Activated T-helper 1 cell treated with anti-CD3 and anti-CD28 coated beads, Interleukin-12 subunit alpha, Interleukin-12 subunit beta, Interleukin-2, Interleukin-4 antibody, amounts not matched to agents 30 ng/mL and 10 ng/mL and 1 ng/mL, durations not matched to agents 14 hours and 24 hours and 36 hours (primary cell): ENCODE measurements at regions of chr14 and their contacts with region 1.

Region 1: GRCh38 chr14:77097700-77098528 is at the start of gene CIPC:
- DNase-seq: peak; percentile 99
- H3K4me3 Mint-ChIP-seq: peak within 1 kb of the TSS; percentile 96
- H3K27ac Mint-ChIP-seq: peak within 1 kb of the TSS; percentile 97
- H3K4me1 Mint-ChIP-seq: peaks cover 40% of the 10 kb centered on the region
- H3K27me3 Mint-ChIP-seq: peaks cover 4% of the 10 kb centered on the region
- total RNA-seq, gene CIPC: 10.3 and 11.5 TPM in 2 replicates

Region 2: DNA sequence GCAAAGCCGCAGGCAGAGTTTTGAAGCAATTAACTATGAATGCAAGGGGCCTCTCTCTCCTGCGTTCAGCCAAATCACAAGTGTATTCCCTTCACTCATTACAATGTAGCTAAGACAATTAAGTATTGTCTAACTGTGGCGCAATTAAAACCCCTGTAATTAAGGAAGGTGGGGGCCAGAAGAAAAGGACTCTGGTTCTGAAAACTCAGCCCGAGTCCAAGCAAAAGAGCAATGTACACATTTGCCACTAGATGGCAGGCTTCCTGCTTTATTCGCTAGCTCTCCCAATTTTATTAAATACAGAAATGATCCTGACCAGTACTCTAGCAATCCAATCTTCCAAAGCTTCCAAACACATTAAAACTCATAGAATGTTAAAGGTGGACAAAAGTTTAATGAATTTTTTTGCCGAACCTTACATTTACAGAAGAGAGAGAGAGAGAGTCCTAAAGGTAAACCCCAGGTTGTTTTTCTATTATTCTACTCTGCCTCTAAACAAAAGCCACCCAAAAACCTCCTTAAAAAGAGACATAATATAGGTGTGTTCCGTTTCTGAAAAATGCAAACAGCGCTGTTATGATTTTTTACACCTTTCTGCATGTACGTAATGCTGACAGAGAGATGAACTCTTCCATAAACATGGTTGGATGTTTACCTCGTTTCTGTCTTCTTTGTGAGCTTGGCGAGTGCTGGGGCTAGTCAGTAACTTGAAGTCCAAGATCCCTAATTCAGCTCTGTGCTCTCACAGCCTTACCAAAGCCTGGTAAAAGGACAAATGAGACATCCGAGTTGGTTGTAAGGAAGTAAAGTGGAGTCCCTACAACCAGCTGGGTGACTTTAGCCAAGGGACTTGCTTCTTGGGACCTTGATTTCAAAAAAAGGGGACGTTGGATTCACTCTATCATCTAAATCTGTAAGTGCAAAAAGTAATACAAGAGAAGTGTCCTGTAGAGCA is 387.6 kb before region 1 on chr14:
- intact Hi-C with region 1: loop called (anchors 2 kb)
- DNase-seq: no peak
- H3K4me3 Mint-ChIP-seq: no peak overlapping the region
- H3K27ac Mint-ChIP-seq: no peak overlapping the region
- H3K4me1 Mint-ChIP-seq: no peaks in the 10 kb centered on the region
- H3K27me3 Mint-ChIP-seq: peaks cover 14% of the 10 kb centered on the region

Region 3: DNA sequence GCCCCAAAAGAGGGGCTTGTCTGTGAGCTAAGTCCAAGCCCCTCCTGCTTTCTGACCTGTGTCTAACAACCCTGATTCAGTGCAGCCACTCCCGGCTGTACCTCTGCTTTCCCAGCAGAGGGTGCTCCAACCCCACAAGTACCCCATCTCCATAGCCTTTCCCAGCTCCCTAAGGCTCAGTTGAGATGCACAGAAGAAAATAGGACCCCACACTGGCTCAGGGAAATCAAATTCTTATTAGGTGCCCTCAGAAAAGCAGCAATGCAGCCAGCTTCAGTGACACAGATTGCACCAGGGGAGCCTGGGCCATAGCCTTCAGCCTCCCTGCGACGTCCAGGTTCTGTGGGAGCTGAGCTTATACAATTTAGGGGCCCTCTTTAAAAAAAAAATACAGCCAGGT is 221.8 kb before region 1 on chr14:
- intact Hi-C with region 1: loop called (anchors 1 kb)
- DNase-seq: peak; percentile 9
- H3K4me3 Mint-ChIP-seq: no peak overlapping the region
- H3K27ac Mint-ChIP-seq: no peak overlapping the region
- H3K4me1 Mint-ChIP-seq: no peaks in the 10 kb centered on the region
- H3K27me3 Mint-ChIP-seq: peaks cover 10% of the 10 kb centered on the region

Region 4: GRCh38 chr14:76962303-76962660 is 135.6 kb before region 1 on chr14:
- intact Hi-C with region 1: loop called (anchors 1 kb)
- DNase-seq: no peak
- H3K4me3 Mint-ChIP-seq: peak overlapping the region; percentile 80
- H3K27ac Mint-ChIP-seq: peak overlapping the region; percentile 80
- H3K4me1 Mint-ChIP-seq: peaks cover 83% of the 10 kb centered on the region
- H3K27me3 Mint-ChIP-seq: peaks cover 26% of the 10 kb centered on the region

Region 5: DNA sequence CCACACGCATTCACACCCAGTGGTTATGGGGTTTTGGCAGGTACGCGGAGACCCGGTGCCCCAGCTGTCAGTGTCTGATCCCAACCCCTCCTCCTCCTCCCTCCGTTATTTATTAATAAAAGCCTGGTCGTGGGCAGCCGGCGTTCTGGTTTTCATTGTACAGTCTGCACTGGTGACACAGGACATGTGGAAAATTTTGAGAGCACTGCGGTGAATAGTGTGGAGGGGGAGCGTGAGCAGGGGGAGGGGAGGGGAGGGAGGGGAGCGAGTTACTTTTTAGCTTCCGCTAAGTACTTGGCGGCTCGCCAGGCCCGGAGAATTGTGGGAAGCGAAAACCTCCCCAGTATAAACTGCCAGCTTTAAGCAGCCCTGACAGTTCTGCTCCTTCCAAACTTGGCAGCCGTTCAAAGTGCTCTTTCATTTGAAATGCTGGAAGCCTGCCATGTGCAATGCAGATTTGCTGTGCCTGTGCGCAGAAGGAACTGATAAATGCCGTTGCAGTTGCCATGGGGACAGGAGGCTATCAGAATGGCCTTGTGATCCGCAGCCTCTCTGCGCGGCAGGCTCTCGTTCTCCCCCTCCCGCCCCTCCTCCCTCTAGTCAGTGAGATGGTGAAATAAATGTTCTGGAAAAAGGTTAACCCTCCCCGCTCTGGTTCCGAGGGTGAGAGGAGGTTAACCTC is 57.7 kb before region 1 on chr14:
- intact Hi-C with region 1: loop called (anchors 1 kb)
- DNase-seq: peak; percentile 83
- H3K4me3 Mint-ChIP-seq: peak overlapping the region; percentile 80
- H3K27ac Mint-ChIP-seq: peak overlapping the region; percentile 91
- H3K4me1 Mint-ChIP-seq: peaks cover 85% of the 10 kb centered on the region
- H3K27me3 Mint-ChIP-seq: no peaks in the 10 kb centered on the region

Region 6: DNA sequence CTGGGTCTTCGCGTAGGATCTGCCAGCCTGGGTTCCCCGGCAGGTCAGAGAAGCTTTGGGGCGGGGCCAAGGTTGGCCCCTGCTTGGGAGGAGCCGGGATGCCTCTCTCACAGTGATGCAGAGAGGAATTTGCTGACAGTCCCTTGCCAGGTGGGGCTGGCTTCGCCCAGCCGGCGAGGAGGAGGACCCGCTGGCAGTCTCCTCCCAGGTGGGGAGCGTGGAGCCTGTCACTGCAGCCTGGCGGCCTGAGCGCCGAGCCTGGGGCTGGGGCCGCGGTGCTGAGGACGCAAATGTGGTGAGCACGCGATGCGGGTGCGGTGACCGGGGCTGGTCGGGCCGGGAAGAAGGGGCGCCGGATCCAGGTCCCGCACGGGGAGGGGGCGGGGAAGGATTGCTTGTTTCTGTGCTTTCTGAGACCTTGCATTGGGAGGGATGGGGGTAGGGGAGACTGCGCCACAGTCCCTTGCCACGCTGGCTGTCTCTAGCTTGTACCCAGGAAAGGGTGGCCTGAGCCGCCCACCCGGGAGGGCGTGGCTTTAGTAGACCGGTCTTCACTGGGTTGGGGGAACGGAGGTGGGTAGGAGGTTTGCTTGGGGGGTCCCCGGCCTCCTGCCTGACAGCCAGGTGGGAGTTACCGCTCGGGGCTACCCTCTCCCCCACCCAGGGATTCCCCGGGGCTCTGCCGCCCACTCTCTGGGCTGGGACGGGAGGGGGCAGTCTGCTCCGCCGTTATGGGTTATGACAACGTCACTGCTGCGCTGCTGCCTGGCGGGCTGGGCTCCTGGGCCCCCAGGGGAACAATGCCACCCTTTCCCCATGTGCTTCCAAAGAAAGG is 83.9 kb after region 1 on chr14 and contains the start of gene TMEM63C:
- intact Hi-C with region 1: no loop called
- DNase-seq: peak; percentile 37
- H3K4me3 Mint-ChIP-seq: peak within 1 kb of the TSS; percentile 73
- H3K27ac Mint-ChIP-seq: no peak within 1 kb of the TSS
- H3K4me1 Mint-ChIP-seq: peaks cover 16% of the 10 kb centered on the region
- H3K27me3 Mint-ChIP-seq: peaks cover 15% of the 10 kb centered on the region
- total RNA-seq, gene TMEM63C: 1.6 TPM in 2 replicates

Region 7: DNA sequence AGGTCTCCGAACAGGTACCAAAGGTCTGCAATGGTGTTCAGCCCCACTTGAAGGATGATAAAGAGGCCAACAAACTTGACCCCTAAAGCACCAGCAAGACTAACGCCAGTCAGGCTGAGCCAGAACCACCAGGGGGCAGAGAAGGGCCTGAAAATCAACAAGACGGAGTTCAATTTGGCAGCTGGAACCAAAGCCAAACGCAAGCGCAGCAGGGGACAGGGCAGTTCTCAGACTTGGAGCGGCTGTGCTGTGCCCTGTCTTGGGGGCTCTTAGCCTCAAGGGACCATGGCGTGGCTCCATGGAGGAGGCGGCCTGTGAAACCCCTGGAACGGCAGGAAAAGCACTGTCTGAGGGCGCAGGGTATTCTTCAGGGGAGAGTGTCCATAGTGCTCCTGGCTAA is 203.2 kb after region 1 on chr14:
- intact Hi-C with region 1: loop called (anchors 1 kb)
- DNase-seq: peak; percentile 16
- H3K4me3 Mint-ChIP-seq: no peak overlapping the region
- H3K27ac Mint-ChIP-seq: no peak overlapping the region
- H3K4me1 Mint-ChIP-seq: peaks cover 24% of the 10 kb centered on the region
- H3K27me3 Mint-ChIP-seq: no peaks in the 10 kb centered on the region

Region 8: GRCh38 chr14:77457522-77458290 is 359.8 kb after region 1 on chr14 and contains the starts of genes AHSA1 and VIPAS39:
- intact Hi-C with region 1: loop called (anchors 1 kb)
- DNase-seq: peak; percentile 92
- H3K4me3 Mint-ChIP-seq: peak within 1 kb of the TSS; percentile 100
- H3K27ac Mint-ChIP-seq: peak within 1 kb of the TSS; percentile 100
- H3K4me1 Mint-ChIP-seq: peaks cover 29% of the 10 kb centered on the region
- H3K27me3 Mint-ChIP-seq: no peaks in the 10 kb centered on the region
- total RNA-seq, gene AHSA1: 370 and 383 TPM in 2 replicates
- total RNA-seq, gene VIPAS39: 17.3 and 18.7 TPM in 2 replicates